ENCODE measurements at regions of chr6 and their contacts with region 1.

Region 1: DNA sequence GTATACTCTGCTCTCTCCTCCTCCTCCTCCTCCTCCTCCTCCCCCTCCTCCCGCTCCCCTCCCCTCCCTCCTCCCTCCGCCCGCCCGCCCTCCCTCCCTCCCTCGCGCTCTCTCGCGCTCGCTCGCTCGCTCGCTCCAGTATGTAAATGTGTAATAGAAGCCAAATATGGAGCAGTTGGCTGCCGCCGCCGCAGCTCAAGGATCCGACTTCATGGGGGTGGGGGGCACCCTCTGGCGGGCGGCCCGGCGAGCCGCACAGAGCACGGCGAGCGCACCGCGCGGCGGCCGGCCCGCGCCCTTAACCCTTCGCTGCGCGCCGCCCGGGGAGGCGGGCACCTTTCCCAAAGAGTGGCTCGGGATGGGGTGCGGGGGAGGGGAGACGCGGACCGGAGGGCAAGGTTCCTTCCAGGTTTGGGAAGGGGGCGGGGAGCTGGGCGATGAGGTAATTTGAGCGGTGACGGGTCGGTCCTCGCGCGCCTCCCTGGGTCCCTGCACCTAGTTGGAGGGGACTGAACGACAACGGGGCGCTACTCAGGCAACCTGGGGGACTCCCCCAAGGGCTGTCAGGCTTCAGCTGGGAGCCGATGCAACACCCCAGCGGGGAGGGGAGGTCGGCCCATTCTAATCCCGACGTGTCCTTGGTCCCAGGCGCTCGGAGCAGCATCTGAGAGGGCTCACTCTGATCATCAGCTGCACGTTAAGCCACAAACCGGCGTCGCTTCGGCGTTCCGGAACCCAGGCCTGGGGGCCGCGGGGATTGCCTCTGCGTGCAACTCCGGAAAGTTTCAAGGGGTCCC is 409 bp upstream of the ATXN1 start:
- DNase-seq: peak; percentile 91
- ATAC-seq: peak; percentile 60
- H3K4me3 Mint-ChIP-seq: peak overlapping the region; percentile 91
- H3K27ac Mint-ChIP-seq: peak overlapping the region; percentile 94
- H3K4me1 Mint-ChIP-seq: peaks cover 58% of the 10 kb centered on the region
- H3K27me3 Mint-ChIP-seq: no peaks in the 10 kb centered on the region

Region 2: GRCh38 chr6:16128759-16129622 is 632.7 kb before region 1 on chr6 and contains the start of gene MYLIP:
- CTCF ChIA-PET with region 1: interaction called, 5 read pairs
- POLR2A ChIA-PET with region 1: no interaction called
- intact Hi-C with region 1: loop called in 1 of 2 experiments (anchors 2 kb)
- DNase-seq: peak; percentile 98
- ATAC-seq: peak; percentile 82
- H3K4me3 Mint-ChIP-seq: peak within 1 kb of the TSS; percentile 90
- H3K27ac Mint-ChIP-seq: peak within 1 kb of the TSS; percentile 86
- H3K4me1 Mint-ChIP-seq: peaks cover 24% of the 10 kb centered on the region
- H3K27me3 Mint-ChIP-seq: no peaks in the 10 kb centered on the region
- total RNA-seq, gene MYLIP: 9.2 to 10.6 TPM

Region 3: DNA sequence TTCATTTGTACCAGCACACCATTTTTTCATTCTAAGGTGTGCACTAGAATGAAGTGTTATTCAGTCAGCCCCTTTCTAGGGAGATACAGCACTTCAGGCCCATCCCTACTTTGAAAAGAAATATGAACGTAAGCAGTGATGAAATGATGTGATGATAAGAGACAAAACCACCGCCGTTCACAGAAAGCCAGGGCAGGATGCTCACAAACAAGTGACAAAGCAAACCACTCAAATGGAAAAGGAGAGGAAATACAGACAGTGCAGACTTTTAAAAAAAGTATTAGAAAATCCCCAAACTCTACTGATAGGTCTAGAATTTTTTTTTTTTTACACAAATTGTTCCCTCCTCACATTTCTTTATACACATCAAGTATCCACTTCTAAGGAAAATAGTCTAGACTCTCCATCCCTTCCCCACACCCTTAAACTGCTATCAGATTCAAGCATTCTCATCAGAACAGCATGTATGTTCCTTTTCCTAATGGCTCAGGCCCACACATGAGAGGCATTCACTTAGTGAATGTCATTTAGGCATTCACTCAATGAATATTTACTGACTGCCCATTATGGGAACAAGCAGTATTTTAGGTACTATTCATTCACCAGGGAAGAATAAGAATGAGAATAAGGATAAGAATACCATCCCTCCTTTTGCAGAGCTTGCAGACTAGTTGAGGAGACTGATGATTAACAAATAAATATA is 279.8 kb before region 1 on chr6:
- CTCF ChIA-PET with region 1: interaction called, 3 read pairs
- POLR2A ChIA-PET with region 1: no interaction called
- intact Hi-C with region 1: loop called in 1 of 2 experiments (anchors 2 kb)
- DNase-seq: peak; percentile 74
- ATAC-seq: peak; percentile 85
- H3K4me3 Mint-ChIP-seq: peak overlapping the region; percentile 10
- H3K27ac Mint-ChIP-seq: peak overlapping the region; percentile 92
- H3K4me1 Mint-ChIP-seq: peaks cover 81% of the 10 kb centered on the region
- H3K27me3 Mint-ChIP-seq: no peaks in the 10 kb centered on the region

Region 4: DNA sequence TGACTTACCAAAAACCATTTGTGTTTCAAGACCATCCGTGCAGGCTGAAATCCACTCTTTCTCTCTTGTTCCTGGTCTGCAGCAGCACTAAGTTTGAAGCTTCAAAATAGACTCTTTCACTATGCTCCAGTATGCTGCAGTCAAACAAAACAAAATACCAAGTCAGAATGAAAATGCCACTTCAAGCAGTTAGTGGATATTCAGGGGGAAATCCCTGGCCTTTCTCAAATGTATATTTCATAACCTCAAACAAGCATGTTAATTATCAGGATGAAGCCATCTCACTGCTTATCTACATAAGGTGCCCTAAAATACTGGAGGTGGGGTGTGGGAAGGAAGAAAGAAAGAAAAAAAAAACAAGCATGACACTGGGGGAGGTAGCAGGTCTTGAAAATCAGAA is 103.9 kb before region 1 on chr6:
- CTCF ChIA-PET with region 1: interaction called, 20 read pairs
- POLR2A ChIA-PET with region 1: interaction called, 3 read pairs
- intact Hi-C with region 1: loop called (anchors 1 to 2 kb)
- DNase-seq: no peak
- ATAC-seq: peak; percentile 70
- H3K4me3 Mint-ChIP-seq: peak overlapping the region; percentile 39
- H3K27ac Mint-ChIP-seq: peak overlapping the region; percentile 81
- H3K4me1 Mint-ChIP-seq: peaks cover 68% of the 10 kb centered on the region
- H3K27me3 Mint-ChIP-seq: no peaks in the 10 kb centered on the region

Region 5: DNA sequence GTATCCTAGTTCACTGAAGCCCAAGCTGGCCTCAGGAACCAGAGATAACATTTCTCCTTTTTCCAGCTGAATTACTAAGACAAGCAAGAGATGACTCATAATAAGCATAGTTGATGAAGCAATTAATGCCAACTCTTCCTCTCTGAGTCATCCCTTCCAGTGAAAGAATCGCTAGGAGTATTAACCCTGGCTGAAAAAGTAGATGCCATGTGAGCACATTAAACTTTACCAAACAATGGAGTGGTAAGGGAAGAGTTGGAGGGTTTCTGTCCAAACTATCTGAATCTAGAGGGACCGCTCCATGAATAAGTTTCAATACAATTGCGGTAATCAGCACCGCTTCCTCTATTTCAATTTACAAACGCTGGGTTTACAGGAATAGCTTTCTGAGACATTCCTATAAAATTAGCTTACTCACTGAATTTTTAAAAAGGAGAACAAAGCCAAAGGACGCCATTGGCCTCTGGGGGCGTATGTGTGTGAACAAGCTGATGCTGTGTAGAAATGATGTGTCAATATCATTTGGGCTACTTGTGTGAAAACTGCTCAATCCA is 48.7 kb before region 1 on chr6:
- CTCF ChIA-PET with region 1: interaction called, 11 read pairs
- POLR2A ChIA-PET with region 1: interaction called, 3 read pairs
- intact Hi-C with region 1: loop called (anchors 1 kb)
- DNase-seq: peak; percentile 57
- ATAC-seq: peak; percentile 63
- H3K4me3 Mint-ChIP-seq: peak overlapping the region; percentile 45
- H3K27ac Mint-ChIP-seq: peak overlapping the region; percentile 91
- H3K4me1 Mint-ChIP-seq: peaks cover 52% of the 10 kb centered on the region
- H3K27me3 Mint-ChIP-seq: no peaks in the 10 kb centered on the region

Region 6: DNA sequence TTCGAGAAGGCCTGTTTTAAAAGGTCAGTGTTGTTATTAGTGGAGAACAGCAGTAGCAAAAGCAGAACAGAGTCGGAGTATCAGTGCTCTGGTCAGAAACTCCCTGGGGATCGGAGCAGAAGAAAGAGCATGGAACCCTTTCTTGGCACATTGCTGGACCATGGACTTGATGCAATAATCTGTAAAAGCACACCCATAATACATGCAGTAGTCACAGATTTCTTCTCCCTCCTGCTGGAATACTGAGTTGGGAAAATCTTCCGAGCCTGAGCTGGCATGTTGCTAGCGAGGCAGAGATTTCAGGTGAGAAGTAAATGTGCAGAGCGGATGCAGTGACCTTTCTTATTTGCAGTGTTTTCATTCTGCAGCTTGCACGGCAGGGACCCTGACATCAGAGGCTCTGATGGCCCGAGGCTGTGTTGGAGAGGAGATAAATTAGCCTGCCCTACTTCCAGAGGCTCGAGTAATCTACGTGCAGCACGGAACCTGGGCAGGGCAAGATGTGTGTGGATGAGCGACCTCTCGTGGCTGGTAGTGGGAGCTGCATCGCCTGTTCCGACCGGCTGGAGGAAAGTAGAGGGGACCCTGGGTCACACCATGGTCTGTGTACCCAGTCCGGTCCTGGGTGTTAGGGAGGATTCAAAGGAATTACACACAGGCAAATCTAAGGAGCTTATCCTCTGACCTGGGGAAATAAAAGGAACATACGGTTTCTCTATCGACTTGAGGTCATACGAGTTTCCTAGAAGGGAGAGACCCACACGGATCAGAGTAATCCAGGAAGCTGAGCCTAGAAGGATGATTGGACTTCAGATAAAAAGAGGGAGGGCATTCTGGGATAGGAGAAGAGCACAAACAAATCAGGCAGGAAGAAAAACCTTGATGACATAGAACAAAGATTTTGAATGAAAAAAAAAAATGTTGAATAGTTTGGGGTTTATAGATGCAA is 203.2 kb after region 1 on chr6:
- CTCF ChIA-PET with region 1: interaction called, 9 read pairs
- POLR2A ChIA-PET with region 1: no interaction called
- intact Hi-C with region 1: loop called (anchors 1 to 5 kb)
- DNase-seq: peak; percentile 84
- ATAC-seq: peak; percentile 97
- H3K4me3 Mint-ChIP-seq: no peak overlapping the region
- H3K27ac Mint-ChIP-seq: no peak overlapping the region
- H3K4me1 Mint-ChIP-seq: peaks cover 15% of the 10 kb centered on the region
- H3K27me3 Mint-ChIP-seq: peaks cover 17% of the 10 kb centered on the region